Gastrocnemius medialis (tissue), 4 donors: ENCODE measurements at regions of chr4 and their contacts with region 1.

Region 1: DNA sequence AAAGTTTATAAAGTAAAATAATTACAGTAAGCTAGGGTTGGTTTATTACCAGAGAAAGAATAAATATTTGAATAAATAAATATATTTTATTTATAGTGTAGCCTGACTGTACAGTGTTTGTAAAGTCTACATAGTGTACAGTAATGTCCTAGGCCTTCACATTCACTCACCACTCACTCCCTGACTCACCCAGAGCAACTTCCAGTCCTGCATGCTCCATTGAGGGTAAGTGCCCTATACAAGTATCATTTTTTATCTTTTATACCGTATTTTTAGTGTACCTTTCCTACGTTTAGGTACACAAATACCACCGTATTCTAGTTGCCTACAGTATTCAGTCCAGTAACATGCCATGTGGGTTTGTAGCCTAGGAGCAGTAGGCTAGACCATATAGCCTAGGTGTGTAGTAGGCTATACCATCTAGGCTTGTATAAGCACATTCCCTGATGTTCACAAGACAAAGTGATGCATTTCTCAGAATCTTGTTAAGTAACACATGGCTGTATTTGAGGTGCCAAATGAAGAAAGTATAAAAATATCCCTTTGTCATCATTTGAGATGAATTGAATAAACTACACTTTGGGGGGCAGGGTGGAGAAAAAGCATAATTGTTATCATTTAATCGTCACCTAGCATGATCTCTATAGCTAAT is 14.7 kb upstream of the KLHL8 start:
- DNase-seq: no peak
- ATAC-seq: no peak
- H3K4me3 ChIP-seq: peak overlapping the region; percentile 49 to 60 (median 54)
- H3K27ac ChIP-seq: peak overlapping the region in 1 of 4 donors; percentile 45
- H3K4me1 ChIP-seq: no peaks in the 10 kb centered on the region
- H3K27me3 ChIP-seq: no peaks in the 10 kb centered on the region
- CTCF ChIP-seq: no peak
- POLR2A ChIP-seq: no peak

Region 2: DNA sequence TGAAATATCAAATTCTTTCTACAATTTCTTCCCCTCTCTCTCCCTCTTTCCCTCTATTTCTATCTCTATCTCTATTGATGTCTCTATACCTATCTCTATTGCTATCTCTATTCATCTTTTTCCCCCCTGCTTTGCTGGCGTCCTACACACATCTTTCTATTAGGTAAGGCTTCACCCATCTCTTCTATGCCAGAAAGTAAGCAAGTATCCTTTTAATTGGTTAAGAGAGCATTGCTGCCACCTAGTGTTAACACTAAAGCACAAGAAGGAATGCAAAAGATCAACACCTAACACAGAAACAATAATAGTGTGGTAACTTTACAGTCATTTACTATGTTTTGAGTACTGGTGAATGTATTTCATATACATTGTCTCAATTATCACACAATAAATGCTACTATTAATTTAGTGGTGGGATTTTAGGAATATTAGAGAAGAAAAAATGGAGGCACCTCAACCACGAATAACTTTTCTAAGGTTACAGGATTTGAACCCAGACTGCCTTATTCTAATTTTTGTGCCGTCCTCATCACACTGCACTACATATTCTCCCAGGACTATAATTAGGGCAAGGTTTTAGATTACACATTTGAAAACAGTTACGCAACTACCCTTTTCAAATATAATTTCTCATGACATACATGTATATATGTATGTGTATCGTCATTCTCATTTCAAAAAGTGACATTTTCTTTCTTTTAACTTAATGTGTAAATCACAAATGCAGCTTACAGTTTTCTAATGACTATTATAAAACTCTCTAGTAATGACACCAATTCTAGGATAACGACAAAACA is 339.3 kb before region 1 on chr4:
- in situ Hi-C with region 1: no loop called
- intact Hi-C with region 1: loop called (anchors 10 kb)
- DNase-seq: no peak
- ATAC-seq: peak in 1 of 2 donors; percentile 64
- H3K4me3 ChIP-seq: no peak overlapping the region
- H3K27ac ChIP-seq: peak overlapping the region in 3 of 4 donors; percentile 22 to 47 (median 30)
- H3K4me1 ChIP-seq: peaks cover 7 to 8% of the 10 kb centered on the region in 2 donors
- H3K27me3 ChIP-seq: no peaks in the 10 kb centered on the region
- CTCF ChIP-seq: peak; percentile 43 to 76 (median 66)
- POLR2A ChIP-seq: no peak

Region 3: DNA sequence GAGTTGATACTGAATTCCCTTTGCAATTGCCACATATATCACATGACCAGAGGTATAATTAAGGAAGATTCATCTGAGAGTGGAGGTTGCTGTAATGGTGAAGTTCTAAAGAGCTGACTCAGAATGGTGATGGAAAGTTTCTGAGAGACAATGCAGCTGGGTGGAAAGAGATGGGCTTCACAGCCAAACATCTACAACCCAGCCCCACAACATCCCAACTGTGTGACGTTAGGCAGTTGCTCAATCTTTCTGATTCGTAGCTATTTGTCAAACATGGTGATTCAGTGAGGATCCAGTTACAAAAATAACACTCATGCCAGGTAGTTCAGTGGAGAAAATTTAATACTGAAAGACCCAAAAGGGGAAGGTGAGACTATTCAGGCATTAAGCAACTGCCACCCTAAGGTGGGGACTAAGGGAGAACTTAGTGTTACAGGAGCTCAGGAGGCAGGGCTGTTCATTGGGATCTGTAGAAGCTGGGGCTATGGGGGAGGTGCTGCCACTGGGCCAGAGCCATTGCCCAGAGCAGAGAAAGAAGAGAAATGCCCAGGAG is 307.2 kb before region 1 on chr4:
- in situ Hi-C with region 1: loop called (anchors 10 kb)
- intact Hi-C with region 1: loop called (anchors 5 kb)
- DNase-seq: peak; percentile 84 to 86
- ATAC-seq: peak; percentile 95 to 96
- H3K4me3 ChIP-seq: no peak overlapping the region
- H3K27ac ChIP-seq: peak overlapping the region; percentile 86 to 92 (median 90)
- H3K4me1 ChIP-seq: peaks cover 16 to 20% of the 10 kb centered on the region in 2 donors
- H3K27me3 ChIP-seq: no peaks in the 10 kb centered on the region
- CTCF ChIP-seq: no peak
- POLR2A ChIP-seq: no peak

Region 4: DNA sequence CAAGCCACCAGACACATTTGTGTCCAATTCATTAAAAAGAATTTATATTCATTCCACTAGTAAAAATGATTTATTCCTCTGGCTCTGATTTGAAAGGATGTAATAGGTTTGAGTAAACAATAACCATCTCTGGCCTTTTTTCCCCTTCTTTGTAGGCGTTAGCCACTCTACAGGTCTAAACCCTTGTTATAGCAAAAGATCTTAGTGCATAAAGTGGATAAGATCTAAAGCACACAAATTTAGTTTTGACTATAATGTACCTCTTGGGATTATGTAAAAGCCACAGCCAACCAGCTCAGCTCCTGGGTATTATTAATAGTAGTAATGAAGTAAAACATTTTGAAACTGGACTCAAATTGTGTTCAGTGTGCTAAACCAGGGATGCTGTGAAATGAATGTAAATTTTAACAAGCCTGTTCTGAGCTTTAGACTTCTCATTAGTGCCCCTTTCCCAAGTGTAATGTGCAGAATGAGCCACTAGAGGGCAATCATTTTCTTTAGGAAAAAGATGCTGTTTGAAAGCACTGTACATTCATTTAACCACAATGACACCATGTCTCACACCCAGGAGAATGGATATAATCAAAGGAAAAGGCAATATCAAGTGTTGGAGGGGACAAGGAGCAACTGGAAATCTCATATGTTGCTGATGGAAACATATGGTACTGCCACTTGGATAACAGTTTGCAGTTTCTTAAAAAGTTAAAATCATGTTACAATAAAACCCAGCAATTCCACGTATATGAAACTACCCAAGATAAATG is 84.5 kb before region 1 on chr4:
- in situ Hi-C with region 1: loop called in 2 of 4 experiments (anchors 5 kb)
- intact Hi-C with region 1: loop called (anchors 1 kb)
- DNase-seq: peak in 1 of 2 donors; percentile 12
- ATAC-seq: peak; percentile 43 to 64
- H3K4me3 ChIP-seq: no peak overlapping the region
- H3K27ac ChIP-seq: no peak overlapping the region
- H3K4me1 ChIP-seq: no peaks in the 10 kb centered on the region
- H3K27me3 ChIP-seq: no peaks in the 10 kb centered on the region
- CTCF ChIP-seq: peak; percentile 83 to 89 (median 86)
- POLR2A ChIP-seq: no peak

Region 5: DNA sequence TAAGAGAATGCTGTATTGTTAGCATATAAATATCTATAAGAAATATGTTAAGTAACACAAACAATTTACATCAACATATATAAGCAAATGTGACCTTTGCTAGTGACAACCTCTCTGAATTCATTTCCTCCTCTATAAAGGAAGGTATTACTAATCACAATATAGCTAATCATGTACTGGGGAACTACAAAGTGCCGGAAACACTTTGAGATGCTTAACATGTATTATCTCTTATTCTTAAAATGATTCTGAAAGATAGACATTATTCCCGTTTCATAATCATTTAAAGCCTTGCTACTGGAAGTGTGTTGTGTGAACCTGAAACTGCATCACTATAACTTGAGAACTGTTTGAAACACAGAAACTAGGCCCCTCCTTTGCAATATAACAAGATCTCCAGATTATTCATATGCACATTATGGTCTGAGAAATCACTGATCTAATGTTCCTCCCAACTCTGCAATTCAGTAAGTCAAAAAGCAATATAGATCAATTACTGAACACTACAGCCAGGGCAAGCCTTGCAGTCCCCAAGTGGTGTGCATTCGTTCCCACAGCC is 68.8 kb before region 1 on chr4:
- in situ Hi-C with region 1: loop called in 1 of 4 experiments (anchors 5 kb)
- intact Hi-C with region 1: no loop called
- DNase-seq: no peak
- ATAC-seq: no peak
- H3K4me3 ChIP-seq: no peak overlapping the region
- H3K27ac ChIP-seq: no peak overlapping the region
- H3K4me1 ChIP-seq: no peaks in the 10 kb centered on the region
- H3K27me3 ChIP-seq: no peaks in the 10 kb centered on the region
- CTCF ChIP-seq: no peak
- POLR2A ChIP-seq: no peak

Region 6: DNA sequence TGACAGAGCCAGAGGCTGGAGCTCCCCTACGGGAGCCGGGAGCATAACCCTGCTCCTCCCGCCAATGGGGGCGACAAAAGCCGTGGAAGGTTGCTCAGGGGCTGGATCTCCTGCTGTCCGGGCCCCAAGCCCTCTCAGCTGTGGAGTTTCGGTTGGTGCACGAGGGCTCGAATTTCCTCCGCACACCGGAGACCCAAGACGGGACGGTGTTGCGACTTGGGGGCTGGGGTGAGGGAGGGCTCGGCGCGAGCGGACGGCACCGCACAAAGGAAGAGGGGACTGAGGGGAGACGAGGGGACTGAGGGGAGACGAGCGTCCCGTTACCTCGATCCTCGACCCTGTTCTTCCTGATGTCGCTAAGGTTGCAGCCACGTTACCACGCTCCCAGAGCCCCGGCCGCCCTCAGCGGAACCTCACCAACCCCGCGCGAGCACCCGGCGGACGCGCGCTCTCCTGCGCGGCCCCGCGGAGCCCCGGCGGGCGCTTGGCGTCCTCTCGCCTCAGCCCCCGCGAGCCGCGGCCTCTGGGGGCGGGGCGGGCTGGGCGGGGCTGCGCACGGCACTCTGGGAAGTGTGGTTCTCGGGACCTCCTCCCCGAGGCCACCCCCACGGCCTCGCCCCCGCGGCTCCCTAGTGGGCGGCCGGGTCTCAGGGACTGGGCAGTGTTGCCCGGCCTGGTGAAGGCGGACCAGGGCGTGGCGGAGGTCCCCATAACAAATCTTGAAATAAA is 14.9 kb before region 1 on chr4 and contains the start of gene KLHL8:
- in situ Hi-C with region 1: no loop called
- intact Hi-C with region 1: loop called (anchors 1 kb)
- DNase-seq: peak; percentile 54 to 81
- ATAC-seq: peak; percentile 87 to 88
- H3K4me3 ChIP-seq: peak within 1 kb of the TSS; percentile 85 to 96 (median 90)
- H3K27ac ChIP-seq: peak within 1 kb of the TSS; percentile 92 to 96 (median 94)
- H3K4me1 ChIP-seq: peaks cover 15 to 23% of the 10 kb centered on the region in 2 donors
- H3K27me3 ChIP-seq: no peaks in the 10 kb centered on the region
- CTCF ChIP-seq: peak in 2 of 5 experiments; percentile 1 to 13
- POLR2A ChIP-seq: peak; percentile 84 to 90
- total RNA-seq, gene KLHL8: 15.5 to 19.4 (median 18.6) TPM